PC-9 (cell line): ENCODE measurements at regions of chr1 and their contacts with region 1.

Region 1: DNA sequence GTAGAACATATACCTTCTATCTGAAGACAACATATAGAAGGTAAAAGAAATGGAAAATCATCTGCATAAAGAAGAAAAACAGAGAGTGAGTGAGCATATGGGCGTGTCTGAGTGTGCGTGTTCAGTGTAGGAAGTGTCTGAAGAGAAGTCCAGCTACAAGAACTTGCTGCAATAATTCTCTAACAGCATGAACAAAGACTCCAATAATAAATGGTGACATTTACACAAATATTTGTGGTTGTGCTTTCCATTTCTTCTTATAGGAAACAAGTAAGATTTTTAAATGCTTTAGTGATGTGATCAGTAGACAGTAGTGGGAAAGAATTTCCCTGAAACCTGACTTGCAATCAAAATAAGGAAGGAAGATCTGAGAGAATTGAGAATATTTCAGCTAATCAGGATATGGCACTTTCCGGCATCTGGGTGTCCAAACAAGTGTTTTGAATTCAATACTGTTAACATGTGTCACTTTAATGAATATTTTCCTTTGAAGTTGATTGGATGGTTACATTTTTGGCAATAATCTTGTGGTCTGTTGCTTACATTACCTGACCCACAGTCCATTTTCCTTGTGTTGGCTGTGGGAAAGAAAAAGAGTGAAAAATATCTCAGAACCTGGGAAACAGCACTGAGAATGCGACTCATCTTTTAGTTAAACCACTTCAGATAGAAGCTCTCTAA is 154.0 kb downstream of the TGFB2 start:
- DNase-seq: peak; percentile 37 to 99
- H3K4me3 ChIP-seq: no peak overlapping the region; the same call in 1 of the 2 replicates
- H3K27ac ChIP-seq: peak overlapping the region; percentile 93
- H3K4me1 ChIP-seq: peaks cover 45% of the 10 kb centered on the region
- H3K27me3 ChIP-seq: no peaks in the 10 kb centered on the region
- CTCF ChIP-seq: no peak

Region 2: GRCh38 chr1:218305472-218306064 is 193.6 kb before region 1 on chr1:
- CTCF ChIA-PET with region 1: no interaction called
- POLR2A ChIA-PET with region 1: no interaction called
- intact Hi-C with region 1: no loop called
- DNase-seq: no peak
- H3K4me3 ChIP-seq: no peak overlapping the region
- H3K27ac ChIP-seq: no peak overlapping the region
- H3K4me1 ChIP-seq: no peaks in the 10 kb centered on the region
- H3K27me3 ChIP-seq: no peaks in the 10 kb centered on the region
- CTCF ChIP-seq: no peak

Region 3: GRCh38 chr1:218377143-218377660 is 121.9 kb before region 1 on chr1:
- CTCF ChIA-PET with region 1: no interaction called
- POLR2A ChIA-PET with region 1: interaction called, 6 read pairs
- intact Hi-C with region 1: loop called (anchors 1 kb)
- DNase-seq: peak; percentile 87 to 96
- H3K4me3 ChIP-seq: peak overlapping the region; percentile 36
- H3K27ac ChIP-seq: peak overlapping the region; percentile 91
- H3K4me1 ChIP-seq: peaks cover 80% of the 10 kb centered on the region
- H3K27me3 ChIP-seq: no peaks in the 10 kb centered on the region
- CTCF ChIP-seq: no peak

Region 4: DNA sequence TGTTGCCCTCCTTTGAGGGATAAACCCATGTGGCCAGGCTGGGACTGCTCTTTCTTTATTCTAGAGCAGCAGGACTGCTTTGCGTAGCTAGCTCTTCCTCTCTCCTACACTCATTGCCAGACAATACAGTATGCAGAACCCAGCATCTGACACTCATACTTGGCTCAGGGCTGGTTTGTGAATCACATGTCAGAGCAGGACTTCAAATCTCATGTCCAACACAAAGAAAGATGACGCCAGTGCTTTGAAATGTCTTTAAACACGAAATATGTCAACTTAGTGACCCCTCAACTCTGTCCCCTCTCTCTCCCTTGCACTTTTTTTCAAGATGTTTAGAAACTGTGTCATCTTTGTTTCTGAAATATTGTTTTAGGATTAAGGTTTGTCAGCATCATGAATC is 19.0 kb before region 1 on chr1:
- CTCF ChIA-PET with region 1: no interaction called
- POLR2A ChIA-PET with region 1: interaction called, 8 read pairs
- intact Hi-C with region 1: loop called (anchors 1 kb)
- DNase-seq: no peak
- H3K4me3 ChIP-seq: no peak overlapping the region
- H3K27ac ChIP-seq: peak overlapping the region; percentile 77
- H3K4me1 ChIP-seq: peaks cover 41% of the 10 kb centered on the region
- H3K27me3 ChIP-seq: no peaks in the 10 kb centered on the region
- CTCF ChIP-seq: no peak

Region 5: DNA sequence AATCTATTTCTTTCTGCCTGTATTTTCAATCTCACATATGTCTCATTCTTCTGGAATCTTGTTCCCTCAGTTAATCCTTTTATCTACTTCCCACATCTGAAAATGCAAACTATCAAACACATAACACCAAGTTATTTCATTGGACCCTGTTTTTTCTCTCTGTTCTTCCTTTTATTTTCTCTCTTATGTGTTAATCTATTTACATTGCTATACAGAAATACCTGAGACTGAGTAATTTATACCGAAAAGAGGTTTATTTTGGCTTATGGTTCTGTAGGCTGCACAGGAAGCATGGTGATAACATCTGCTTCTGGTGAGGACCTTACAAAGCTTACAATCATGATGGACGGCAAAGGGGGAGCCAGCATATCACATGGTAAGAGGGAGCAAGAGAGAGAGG is 93.5 kb after region 1 on chr1:
- CTCF ChIA-PET with region 1: no interaction called
- POLR2A ChIA-PET with region 1: no interaction called
- intact Hi-C with region 1: loop called (anchors 1 kb)
- DNase-seq: peak; percentile 41 to 77
- H3K4me3 ChIP-seq: no peak overlapping the region
- H3K27ac ChIP-seq: peak overlapping the region; percentile 52
- H3K4me1 ChIP-seq: peaks cover 15% of the 10 kb centered on the region
- H3K27me3 ChIP-seq: no peaks in the 10 kb centered on the region
- CTCF ChIP-seq: no peak

Region 6: GRCh38 chr1:219066631-219067349 is 567.6 kb after region 1 on chr1:
- CTCF ChIA-PET with region 1: interaction called, 3 read pairs
- POLR2A ChIA-PET with region 1: no interaction called
- intact Hi-C with region 1: loop called (anchors 2 kb)
- DNase-seq: peak; percentile 2 to 78
- H3K4me3 ChIP-seq: no peak overlapping the region
- H3K27ac ChIP-seq: peak overlapping the region; percentile 30
- H3K4me1 ChIP-seq: peaks cover 5% of the 10 kb centered on the region; the same call in 1 of the 2 replicates
- H3K27me3 ChIP-seq: no peaks in the 10 kb centered on the region
- CTCF ChIP-seq: peak; percentile 84

Region 7: GRCh38 chr1:219566951-219567947 is 1068.1 kb after region 1 on chr1:
- CTCF ChIA-PET with region 1: no interaction called
- POLR2A ChIA-PET with region 1: no interaction called
- intact Hi-C with region 1: loop called (anchors 10 kb)
- DNase-seq: no peak
- H3K4me3 ChIP-seq: no peak overlapping the region
- H3K27ac ChIP-seq: no peak overlapping the region
- H3K4me1 ChIP-seq: peaks cover 19% of the 10 kb centered on the region
- H3K27me3 ChIP-seq: no peaks in the 10 kb centered on the region
- CTCF ChIP-seq: peak; percentile 65